PC-3 (cell line): ENCODE measurements at regions of chr3 and their contacts with region 1.

Region 1: GRCh38 chr3:158644345-158644908 is at the start of gene GFM1:
- DNase-seq: peak; percentile 90
- ATAC-seq: peak; percentile 92
- H3K4me3 ChIP-seq: peak within 1 kb of the TSS; percentile 87
- H3K27ac ChIP-seq: peak within 1 kb of the TSS; percentile 74
- H3K4me1 ChIP-seq: peaks cover 9% of the 10 kb centered on the region; the same call in 1 of the 2 replicates
- H3K27me3 ChIP-seq: no peaks in the 10 kb centered on the region
- CTCF ChIP-seq: peak; percentile 65
- total RNA-seq, gene GFM1: 37.5 and 53.0 TPM in 2 replicates

Region 2: GRCh38 chr3:158381262-158381868 is 263.1 kb before region 1 on chr3:
- CTCF ChIA-PET with region 1: no interaction called
- POLR2A ChIA-PET with region 1: no interaction called
- intact Hi-C with region 1: no loop called
- DNase-seq: peak; percentile 59
- ATAC-seq: peak; percentile 90
- H3K4me3 ChIP-seq: no peak overlapping the region
- H3K27ac ChIP-seq: peak overlapping the region; percentile 52
- H3K4me1 ChIP-seq: peaks cover 11% of the 10 kb centered on the region
- H3K27me3 ChIP-seq: no peaks in the 10 kb centered on the region
- CTCF ChIP-seq: no peak

Region 3: DNA sequence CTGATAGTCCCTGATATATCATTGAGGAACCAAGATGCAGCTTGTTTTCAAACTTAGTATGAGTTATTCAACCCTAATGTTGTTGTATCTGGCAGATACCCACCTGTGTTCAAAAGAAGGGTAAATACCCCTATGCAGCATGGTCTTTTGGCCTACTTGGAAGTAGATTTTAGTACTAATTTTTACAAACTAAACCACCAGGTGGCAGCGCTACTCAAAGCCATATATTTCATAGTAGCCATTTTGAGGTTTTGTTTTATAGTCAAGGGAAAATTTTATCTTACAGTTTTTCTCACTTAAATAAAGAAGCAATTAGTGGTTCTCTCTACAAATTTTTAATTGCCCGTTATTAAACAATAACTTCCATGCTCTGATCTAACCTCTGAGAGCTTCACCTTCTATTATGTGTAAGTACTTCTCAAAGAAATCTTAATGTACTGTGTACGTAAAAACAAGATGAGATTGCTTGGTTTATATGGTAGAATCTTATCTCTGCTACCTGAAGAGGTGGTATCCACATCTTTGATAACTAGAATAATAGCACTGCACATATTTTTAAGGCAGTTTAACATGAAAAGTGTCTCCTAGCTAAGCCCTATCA is 104.9 kb before region 1 on chr3:
- CTCF ChIA-PET with region 1: interaction called, 4 read pairs
- POLR2A ChIA-PET with region 1: no interaction called
- intact Hi-C with region 1: loop called (anchors 5 kb)
- DNase-seq: peak; percentile 58
- ATAC-seq: no peak; the same call in 1 of the 2 replicates
- H3K4me3 ChIP-seq: no peak overlapping the region
- H3K27ac ChIP-seq: no peak overlapping the region
- H3K4me1 ChIP-seq: no peaks in the 10 kb centered on the region
- H3K27me3 ChIP-seq: no peaks in the 10 kb centered on the region
- CTCF ChIP-seq: peak; percentile 63

Region 4: GRCh38 chr3:158570999-158571974 is 73.1 kb before region 1 on chr3 and contains the start of gene MLF1:
- CTCF ChIA-PET with region 1: interaction called, 4 read pairs
- POLR2A ChIA-PET with region 1: interaction called, 3 read pairs
- intact Hi-C with region 1: loop called (anchors 5 kb)
- DNase-seq: peak; percentile 94
- ATAC-seq: peak; percentile 97
- H3K4me3 ChIP-seq: peak within 1 kb of the TSS; percentile 79
- H3K27ac ChIP-seq: peak within 1 kb of the TSS; percentile 46
- H3K4me1 ChIP-seq: peaks cover 5% of the 10 kb centered on the region; the same call in 1 of the 2 replicates
- H3K27me3 ChIP-seq: no peaks in the 10 kb centered on the region
- CTCF ChIP-seq: no peak
- total RNA-seq, gene MLF1: 11.9 and 15.6 TPM in 2 replicates

Region 5: DNA sequence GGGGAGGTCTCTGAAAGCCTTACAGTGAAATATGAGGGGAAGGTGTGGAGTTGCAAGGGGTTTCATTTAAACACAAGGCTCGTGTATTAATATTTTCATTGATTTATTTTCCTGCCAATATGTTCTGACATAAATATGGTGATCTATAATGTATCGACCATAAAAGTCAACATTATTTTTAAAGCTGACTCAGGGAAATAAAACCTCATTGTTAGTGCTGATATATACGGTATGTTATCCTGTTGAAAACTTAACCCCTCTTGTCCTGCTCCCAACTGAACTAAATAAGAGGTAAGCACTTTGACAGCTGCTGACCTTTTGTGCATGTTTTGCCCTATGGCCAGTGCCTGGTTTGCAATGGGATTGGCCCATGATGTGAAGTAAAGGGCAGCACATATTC is 205.3 kb after region 1 on chr3:
- CTCF ChIA-PET with region 1: no interaction called
- POLR2A ChIA-PET with region 1: no interaction called
- intact Hi-C with region 1: no loop called
- DNase-seq: no peak
- ATAC-seq: no peak
- H3K4me3 ChIP-seq: no peak overlapping the region
- H3K27ac ChIP-seq: no peak overlapping the region
- H3K4me1 ChIP-seq: no peaks in the 10 kb centered on the region
- H3K27me3 ChIP-seq: no peaks in the 10 kb centered on the region
- CTCF ChIP-seq: no peak